Aorta (tissue), 5 donors: ENCODE measurements at regions of chr6 and their contacts with region 1.

Region 1: GRCh38 chr6:85642774-85643536 is at the start of gene SYNCRIP:
- DNase-seq: peak; percentile 99 to 100
- ATAC-seq: peak; percentile 96
- H3K4me3 ChIP-seq: peak within 1 kb of the TSS; percentile 76 to 81
- H3K27ac ChIP-seq: peak within 1 kb of the TSS; percentile 94 to 99
- H3K4me1 ChIP-seq: no peaks in the 10 kb centered on the region
- H3K27me3 ChIP-seq: no peaks in the 10 kb centered on the region
- total RNA-seq, gene SYNCRIP: 96.4 to 119 TPM

Region 2: DNA sequence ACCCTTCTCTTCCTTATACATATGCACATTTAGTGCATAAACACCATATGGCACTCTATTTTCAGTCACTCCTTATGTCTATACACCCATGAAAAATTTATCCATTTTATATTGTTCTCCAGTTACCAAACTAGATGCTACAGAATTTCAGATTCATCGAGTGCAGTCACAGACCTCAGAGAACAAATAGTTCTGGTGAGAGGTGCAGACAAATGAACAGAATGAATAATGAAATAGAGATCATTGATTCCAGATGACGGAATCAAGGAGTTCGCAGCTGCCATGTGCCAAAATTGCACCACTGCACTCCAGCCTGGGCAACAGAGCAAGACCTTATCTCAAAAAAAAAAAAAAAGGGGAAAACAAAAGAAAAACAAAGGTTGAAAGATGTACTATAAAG is 1200.7 kb before region 1 on chr6:
- intact Hi-C with region 1: no loop called
- DNase-seq: no peak
- ATAC-seq: no peak
- H3K4me3 ChIP-seq: no peak overlapping the region
- H3K27ac ChIP-seq: no peak overlapping the region
- H3K4me1 ChIP-seq: peaks cover 0 to 5% of the 10 kb centered on the region in 2 donors
- H3K27me3 ChIP-seq: no peaks in the 10 kb centered on the region

Region 3: DNA sequence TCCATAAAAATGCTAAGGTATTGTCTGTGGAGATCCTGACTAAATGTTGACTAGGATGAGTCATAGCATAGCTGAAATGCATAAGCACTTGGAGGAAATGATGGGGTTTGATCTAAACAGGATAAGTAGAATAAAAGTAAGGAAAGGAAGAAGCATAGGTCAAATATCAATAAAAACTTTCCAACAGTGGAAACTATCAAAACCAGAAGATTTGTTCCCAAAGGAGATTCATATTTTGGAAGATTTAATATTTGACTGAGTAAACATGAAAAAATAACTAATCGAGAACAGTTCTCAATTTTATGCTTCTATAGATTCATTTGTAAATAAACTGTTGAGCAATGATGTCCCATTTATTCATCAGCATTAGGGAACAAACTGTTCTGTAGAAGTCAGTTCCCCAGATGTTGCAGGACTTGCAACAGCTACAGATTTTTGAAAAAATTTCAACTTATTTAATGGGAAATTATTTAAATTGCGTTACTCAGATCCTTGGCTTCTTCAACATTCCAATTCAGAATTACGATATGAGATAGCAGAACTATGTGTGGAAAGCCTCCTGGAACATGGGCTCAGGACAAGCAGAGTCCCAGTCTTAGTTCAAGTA is 744.9 kb before region 1 on chr6:
- intact Hi-C with region 1: no loop called
- DNase-seq: no peak
- ATAC-seq: no peak
- H3K4me3 ChIP-seq: no peak overlapping the region
- H3K27ac ChIP-seq: no peak overlapping the region
- H3K4me1 ChIP-seq: no peaks in the 10 kb centered on the region
- H3K27me3 ChIP-seq: no peaks in the 10 kb centered on the region

Region 4: GRCh38 chr6:85460921-85461797 is 181.8 kb before region 1 on chr6:
- intact Hi-C with region 1: no loop called
- DNase-seq: no peak
- ATAC-seq: peak; percentile 56
- H3K4me3 ChIP-seq: no peak overlapping the region
- H3K27ac ChIP-seq: peak overlapping the region; percentile 52 to 57
- H3K4me1 ChIP-seq: peaks cover 2 to 16% of the 10 kb centered on the region in 2 donors
- H3K27me3 ChIP-seq: no peaks in the 10 kb centered on the region

Region 5: GRCh38 chr6:85593438-85594196 is 49.3 kb before region 1 on chr6 and contains the start of gene SNX14:
- intact Hi-C with region 1: loop called in 1 of 2 experiments (anchors 5 kb)
- DNase-seq: peak; percentile 98 to 99
- ATAC-seq: peak; percentile 99
- H3K4me3 ChIP-seq: peak within 1 kb of the TSS; percentile 74 to 83
- H3K27ac ChIP-seq: peak within 1 kb of the TSS; percentile 92 to 98
- H3K4me1 ChIP-seq: peaks cover 0 to 2% of the 10 kb centered on the region in 2 donors
- H3K27me3 ChIP-seq: no peaks in the 10 kb centered on the region
- total RNA-seq, gene SNX14: 82.3 to 85.1 TPM